Esophagus muscularis mucosa (tissue), 4 donors: ENCODE measurements at regions of chr3 and their contacts with region 1.

Region 1: GRCh38 chr3:7309641-7310102 is 448.8 kb downstream of the GRM7 start:
- DNase-seq: peak; percentile 93
- H3K4me3 ChIP-seq: peak overlapping the region in 2 of 4 donors; percentile 9 to 24
- H3K27ac ChIP-seq: peak overlapping the region in 3 of 4 donors; percentile 2 to 58 (median 47)
- H3K4me1 ChIP-seq: peaks cover 20 to 31% (median 26%) of the 10 kb centered on the region in 4 donors
- H3K27me3 ChIP-seq: no peaks in the 10 kb centered on the region
- CTCF ChIP-seq: no peak
- EP300 ChIP-seq: peak; percentile 28
- POLR2A ChIP-seq: no peak

Region 2: GRCh38 chr3:7377103-7377502 is 67.4 kb after region 1 on chr3:
- intact Hi-C with region 1: loop called (anchors 5 kb)
- DNase-seq: no peak
- H3K4me3 ChIP-seq: no peak overlapping the region
- H3K27ac ChIP-seq: no peak overlapping the region
- H3K4me1 ChIP-seq: peaks cover 0 to 24% (median 18%) of the 10 kb centered on the region in 4 donors
- H3K27me3 ChIP-seq: no peaks in the 10 kb centered on the region
- CTCF ChIP-seq: no peak
- EP300 ChIP-seq: no peak
- POLR2A ChIP-seq: no peak